Dorsolateral prefrontal cortex (tissue), 120 donors: ENCODE measurements at regions of chr18 and their contacts with region 1.

Region 1: DNA sequence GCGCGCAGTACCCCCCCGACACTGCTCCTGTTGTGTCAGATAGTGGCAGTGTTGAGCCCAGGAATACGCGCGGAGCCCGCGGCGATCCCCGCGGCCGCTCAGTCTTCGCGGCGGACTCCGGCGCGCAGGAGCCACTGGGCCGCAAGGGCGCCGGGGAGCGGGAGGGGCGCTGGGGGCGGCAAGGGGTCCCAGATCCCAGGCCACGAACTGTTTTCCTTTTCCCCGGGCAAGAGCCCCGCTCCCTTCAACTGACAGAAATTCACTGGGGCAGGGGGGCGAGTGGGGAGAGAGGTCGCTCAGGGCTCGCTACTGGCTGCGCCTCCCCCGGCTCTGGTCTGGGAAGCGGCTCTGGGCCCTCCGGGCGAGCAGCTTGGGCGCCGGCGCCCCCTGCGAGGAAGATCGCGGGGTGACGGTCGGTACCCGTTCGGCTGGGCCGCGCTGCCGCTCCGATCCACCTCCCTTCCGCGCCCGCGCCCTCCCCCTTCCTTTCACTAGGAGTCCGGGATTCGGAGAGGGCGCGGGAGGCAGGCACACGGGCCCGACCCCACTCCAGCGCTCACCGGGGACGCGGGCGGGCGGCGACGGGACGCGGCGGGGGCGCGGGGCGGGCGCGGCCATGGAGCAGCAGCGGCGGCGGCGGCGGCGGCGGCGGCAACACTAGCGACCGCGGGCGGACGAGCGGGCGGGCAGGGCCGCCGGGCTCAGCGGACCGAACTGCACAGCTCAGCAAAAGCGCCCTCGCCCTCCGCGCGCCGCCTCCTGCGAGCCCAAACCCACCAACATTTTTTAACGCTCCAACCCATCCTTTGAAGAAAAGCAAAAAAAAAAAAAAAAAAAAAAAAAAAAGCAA is 1.4 kb upstream of the SETBP1 start:
- DNase-seq: peak; percentile 70 to 91 (median 86)
- H3K4me3 ChIP-seq: peak overlapping the region; percentile 54 to 89 (median 80)
- H3K27ac ChIP-seq: peak overlapping the region; percentile 77 to 99 (median 95)
- H3K27me3 ChIP-seq: no peaks in the 10 kb centered on the region
- CTCF ChIP-seq: peak; percentile 51 to 87 (median 74)

Region 2: GRCh38 chr18:44564922-44565321 is 114.4 kb before region 1 on chr18:
- intact Hi-C with region 1: no loop called
- DNase-seq: no peak
- H3K4me3 ChIP-seq: no peak overlapping the region
- H3K27ac ChIP-seq: no peak overlapping the region
- H3K27me3 ChIP-seq: peaks cover 0 to 5% (median 0%) of the 10 kb centered on the region in 45 donors
- CTCF ChIP-seq: no peak

Region 3: GRCh38 chr18:44594799-44595467 is 84.3 kb before region 1 on chr18:
- intact Hi-C with region 1: loop called in 1 of 2 experiments (anchors 5 kb)
- DNase-seq: no peak
- H3K4me3 ChIP-seq: no peak overlapping the region
- H3K27ac ChIP-seq: no peak overlapping the region
- H3K27me3 ChIP-seq: peaks cover 0 to 17% (median 0%) of the 10 kb centered on the region in 45 donors
- CTCF ChIP-seq: no peak

Region 4: DNA sequence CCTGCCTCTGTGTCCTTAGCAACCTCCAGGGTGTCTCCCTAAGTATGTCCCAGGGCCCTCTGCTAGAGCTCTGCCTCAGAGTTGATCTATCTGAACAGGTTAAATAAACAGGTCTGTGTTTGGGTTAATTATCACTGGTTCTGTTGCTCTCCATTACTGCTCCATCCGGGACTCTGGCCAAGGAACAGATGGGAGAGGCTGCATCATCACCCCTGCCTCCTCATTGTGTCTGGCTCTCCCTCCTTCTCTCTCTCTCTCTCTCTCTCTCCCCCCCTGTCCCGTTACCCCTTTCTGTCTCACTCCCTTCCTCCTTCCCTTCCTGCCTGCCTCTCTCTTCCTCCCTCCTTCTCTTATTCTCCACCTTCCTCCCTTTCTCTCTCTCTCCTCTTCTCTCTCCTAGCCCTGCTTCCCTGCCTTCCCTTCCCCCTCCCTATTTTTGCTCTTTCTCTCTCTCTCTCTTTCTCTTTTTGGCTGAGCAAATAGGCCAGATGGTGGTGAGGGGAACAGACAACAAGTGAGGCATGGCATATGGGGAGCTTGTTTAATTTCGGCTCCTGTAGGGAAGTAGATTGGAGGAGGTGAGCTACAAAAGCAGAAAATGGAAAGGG is 63.5 kb after region 1 on chr18:
- intact Hi-C with region 1: loop called (anchors 1 to 2 kb)
- DNase-seq: peak; percentile 36 to 90 (median 68)
- H3K4me3 ChIP-seq: peak overlapping the region in 20 of 59 donors; percentile 0 to 38 (median 18)
- H3K27ac ChIP-seq: peak overlapping the region in 48 of 59 donors; percentile 34 to 96 (median 80)
- H3K27me3 ChIP-seq: no peaks in the 10 kb centered on the region
- CTCF ChIP-seq: no peak

Region 5: GRCh38 chr18:44826418-44827259 is 147.4 kb after region 1 on chr18:
- intact Hi-C with region 1: loop called in 1 of 2 experiments (anchors 10 kb)
- DNase-seq: peak in 6 of 10 donors; percentile 40 to 70 (median 52)
- H3K4me3 ChIP-seq: no peak overlapping the region
- H3K27ac ChIP-seq: peak overlapping the region in 44 of 59 donors; percentile 20 to 81 (median 60)
- H3K27me3 ChIP-seq: no peaks in the 10 kb centered on the region
- CTCF ChIP-seq: peak in 2 of 56 donors; percentile 7 to 10

Region 6: DNA sequence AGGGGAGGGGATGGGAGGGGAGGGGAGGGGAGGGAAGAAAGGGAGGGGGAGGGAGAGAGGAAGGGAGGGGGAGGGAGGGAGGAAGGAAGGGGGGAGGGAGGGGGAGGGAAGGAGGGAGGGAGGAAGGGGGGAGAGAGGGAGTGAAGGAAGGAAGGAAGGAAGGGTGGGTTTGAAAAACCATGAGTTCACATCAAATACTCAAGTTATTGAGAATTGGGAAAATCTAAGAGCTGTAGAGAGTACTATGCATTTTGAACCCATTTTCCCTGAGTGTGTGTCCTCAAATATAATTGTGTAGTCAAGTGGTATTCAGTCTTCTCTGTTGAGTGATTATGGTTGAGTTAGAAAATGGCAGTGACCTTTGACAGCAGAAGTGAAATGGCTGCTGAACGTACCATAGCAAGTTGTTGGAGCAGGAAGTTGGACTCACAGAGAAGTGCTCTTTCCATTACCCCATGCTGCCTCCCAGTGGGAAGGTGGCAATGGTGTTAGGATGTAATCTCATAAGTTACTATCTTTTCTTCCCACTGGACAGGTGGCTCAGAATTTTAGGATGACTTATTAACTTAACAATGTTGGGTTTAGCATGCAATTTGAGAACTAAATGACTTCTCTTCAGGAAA is 216.0 kb after region 1 on chr18:
- intact Hi-C with region 1: loop called in 1 of 2 experiments (anchors 5 kb)
- DNase-seq: peak in 3 of 10 donors; percentile 22 to 61 (median 34)
- H3K4me3 ChIP-seq: no peak overlapping the region
- H3K27ac ChIP-seq: no peak overlapping the region
- H3K27me3 ChIP-seq: no peaks in the 10 kb centered on the region
- CTCF ChIP-seq: peak in 49 of 56 donors; percentile 8 to 62 (median 42)

Region 7: DNA sequence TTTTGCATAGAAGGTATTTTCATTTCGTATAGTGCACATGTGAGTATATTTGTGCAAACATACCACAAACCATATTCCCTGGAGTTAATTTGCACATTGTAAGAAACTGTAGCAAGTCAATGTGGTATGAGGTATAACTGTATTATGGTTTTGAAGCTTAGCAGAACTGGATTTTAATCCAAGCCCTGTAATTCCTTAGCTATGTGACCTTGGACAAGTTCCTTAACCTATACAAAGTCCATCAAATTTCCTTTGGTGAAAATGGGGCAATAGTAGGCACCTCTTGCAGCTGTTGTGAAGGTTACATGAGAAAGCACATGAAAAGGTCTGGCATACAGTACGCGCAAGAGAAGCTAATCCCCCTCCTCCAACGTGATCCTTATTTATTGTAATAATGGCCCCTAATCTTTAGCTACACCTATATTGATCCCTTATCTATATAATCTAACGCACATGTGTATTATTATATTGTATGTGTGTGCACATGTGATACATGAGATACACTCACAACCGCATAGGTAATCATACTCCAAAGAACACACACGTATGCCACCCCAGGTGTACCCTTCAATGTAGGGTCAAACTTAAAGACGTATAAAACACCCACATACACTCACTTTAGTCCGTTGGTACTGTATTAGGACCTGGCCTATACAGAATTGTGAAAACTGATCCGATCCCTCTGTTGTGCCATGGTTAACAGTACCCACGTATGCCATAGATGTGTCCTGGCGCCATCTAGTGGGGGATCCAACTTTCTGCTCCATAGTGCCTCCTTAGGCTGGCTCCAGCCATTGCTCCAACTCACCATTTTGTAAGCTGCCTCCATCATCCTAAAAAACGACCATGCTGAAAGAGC is 533.1 kb after region 1 on chr18:
- intact Hi-C with region 1: loop called in 1 of 2 experiments (anchors 2 kb)
- DNase-seq: peak; percentile 25 to 84 (median 68)
- H3K4me3 ChIP-seq: no peak overlapping the region
- H3K27ac ChIP-seq: no peak overlapping the region
- H3K27me3 ChIP-seq: no peaks in the 10 kb centered on the region
- CTCF ChIP-seq: peak in 55 of 56 donors; percentile 29 to 87 (median 74)

Region 8: GRCh38 chr18:45379903-45380302 is 700.6 kb after region 1 on chr18:
- intact Hi-C with region 1: loop called (anchors 2 to 5 kb)
- DNase-seq: no peak
- H3K4me3 ChIP-seq: no peak overlapping the region
- H3K27ac ChIP-seq: no peak overlapping the region
- H3K27me3 ChIP-seq: peaks cover 0 to 4% (median 0%) of the 10 kb centered on the region in 45 donors
- CTCF ChIP-seq: no peak